Activated CD4-positive, alpha-beta T cell treated with anti-CD3 and anti-CD28 coated beads for 36 hours (primary cell): ENCODE measurements at regions of chr7 and their contacts with region 1.

Region 1: DNA sequence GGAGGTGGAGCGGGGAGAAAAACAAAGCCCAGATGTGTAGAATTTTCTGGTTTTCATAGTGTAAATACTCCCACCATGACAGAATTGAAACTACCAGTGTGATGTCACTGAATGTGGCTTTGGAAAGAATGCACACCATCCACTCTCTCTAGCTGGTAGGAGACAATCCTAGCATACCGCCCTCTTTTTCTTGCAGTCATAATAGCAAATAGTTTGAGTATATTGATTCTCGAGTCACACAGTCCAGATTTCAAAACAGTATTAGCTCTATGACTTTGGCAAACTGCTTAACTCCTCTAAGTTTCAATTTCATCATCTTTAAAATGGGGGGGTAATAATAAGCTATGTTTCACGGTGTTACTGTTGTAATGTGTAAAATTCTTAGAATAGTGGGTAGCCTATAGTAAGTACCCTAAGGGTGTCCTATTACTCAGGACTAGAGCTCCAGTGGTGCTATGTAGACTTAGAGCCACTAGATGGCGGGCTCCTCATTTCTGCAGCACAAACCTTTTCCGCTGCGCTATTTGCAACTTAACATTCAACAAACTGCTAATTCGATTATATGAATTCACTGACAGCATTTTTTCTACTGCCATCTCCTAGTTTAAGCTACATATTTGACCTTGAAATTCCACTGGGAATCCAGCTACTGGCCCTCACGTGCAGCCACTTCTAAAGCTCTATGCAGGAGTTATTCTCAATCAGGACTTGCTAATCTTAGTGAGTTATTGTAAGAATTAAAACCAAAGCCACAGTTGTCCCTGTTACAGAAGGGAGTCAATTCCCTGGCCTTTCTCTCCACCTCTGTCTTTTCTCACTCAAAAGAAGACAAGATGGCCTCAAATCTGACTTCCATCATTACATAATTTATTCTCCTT is 18.7 kb downstream of the TAS2R40 start:
- DNase-seq: peak; percentile 80
- ATAC-seq: peak; percentile 73
- H3K4me3 Mint-ChIP-seq: no peak overlapping the region
- H3K27ac Mint-ChIP-seq: peak overlapping the region; percentile 51
- H3K4me1 Mint-ChIP-seq: peaks cover 28% of the 10 kb centered on the region
- H3K27me3 Mint-ChIP-seq: peaks cover 7% of the 10 kb centered on the region

Region 2: GRCh38 chr7:143229054-143229790 is 11.3 kb before region 1 on chr7:
- CTCF ChIA-PET with region 1: interaction called, 12 read pairs
- POLR2A ChIA-PET with region 1: no interaction called
- intact Hi-C with region 1: no loop called
- DNase-seq: no peak
- ATAC-seq: no peak
- H3K4me3 Mint-ChIP-seq: no peak overlapping the region
- H3K27ac Mint-ChIP-seq: no peak overlapping the region
- H3K4me1 Mint-ChIP-seq: no peaks in the 10 kb centered on the region
- H3K27me3 Mint-ChIP-seq: no peaks in the 10 kb centered on the region

Region 3: DNA sequence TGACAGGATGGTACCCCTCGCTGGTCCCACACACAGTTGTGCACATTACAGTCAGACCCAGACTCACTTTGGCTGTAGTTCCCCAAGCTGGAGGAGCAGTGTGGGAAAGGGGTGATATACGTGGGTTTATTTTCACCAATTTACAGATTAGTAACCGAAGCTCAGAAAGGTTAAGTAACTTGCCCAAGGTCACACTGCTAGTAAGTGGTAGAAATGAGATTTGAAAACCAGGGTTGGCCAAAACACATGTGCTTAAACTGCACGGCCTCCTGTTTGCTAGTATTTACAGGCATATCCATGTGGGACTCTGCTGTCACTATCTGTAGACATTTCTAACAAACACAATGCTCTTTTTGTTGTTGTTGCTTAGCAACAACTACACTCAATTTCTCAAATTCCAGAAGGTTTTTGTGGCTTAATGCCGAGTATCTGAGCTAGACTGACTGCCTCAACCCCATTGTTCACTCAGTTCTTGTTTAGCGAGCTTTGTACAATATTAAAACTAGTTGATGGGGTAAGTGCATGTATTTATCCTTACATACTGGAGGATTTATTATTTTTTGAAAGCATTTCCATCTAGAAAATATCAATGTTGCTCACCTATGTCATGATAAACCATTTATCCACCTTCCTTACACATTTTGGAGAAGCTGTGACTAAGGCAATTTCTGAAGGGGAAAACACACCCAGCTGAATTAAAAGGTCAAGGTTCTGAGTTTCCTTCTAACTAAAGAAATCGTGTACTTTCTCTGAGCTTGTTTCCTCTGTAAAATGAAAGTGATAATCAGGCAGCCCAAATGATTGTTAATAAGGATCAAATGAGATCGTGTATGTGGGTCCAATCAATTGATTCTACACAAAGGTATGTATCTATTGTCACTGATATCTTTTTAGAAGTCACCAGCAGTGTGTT is 38.9 kb after region 1 on chr7:
- CTCF ChIA-PET with region 1: interaction called, 30 read pairs
- POLR2A ChIA-PET with region 1: interaction called, 3 read pairs
- intact Hi-C with region 1: loop called in 1 of 2 experiments (anchors 2 kb)
- DNase-seq: no peak
- ATAC-seq: peak; percentile 79
- H3K4me3 Mint-ChIP-seq: peak overlapping the region; percentile 49
- H3K27ac Mint-ChIP-seq: peak overlapping the region; percentile 90
- H3K4me1 Mint-ChIP-seq: peaks cover 38% of the 10 kb centered on the region
- H3K27me3 Mint-ChIP-seq: no peaks in the 10 kb centered on the region

Region 4: DNA sequence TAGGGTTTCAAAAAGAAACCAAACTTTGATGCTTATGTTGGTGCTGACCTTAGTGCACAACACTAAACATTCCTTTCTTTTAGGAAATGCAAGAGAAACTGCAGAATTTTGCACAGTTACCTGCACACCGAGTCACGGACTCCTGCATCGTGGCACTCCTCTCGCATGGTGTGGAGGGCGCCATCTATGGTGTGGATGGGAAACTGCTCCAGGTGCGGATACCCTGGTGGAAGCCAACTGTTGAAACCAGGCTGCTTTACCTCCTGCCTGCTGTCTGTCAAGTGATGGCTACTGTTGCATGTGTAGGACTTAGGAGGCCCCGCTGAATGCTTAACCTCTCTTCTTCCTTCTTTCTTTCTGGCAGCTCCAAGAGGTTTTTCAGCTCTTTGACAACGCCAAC is 59.3 kb after region 1 on chr7:
- CTCF ChIA-PET with region 1: interaction called, 182 read pairs
- POLR2A ChIA-PET with region 1: interaction called, 11 read pairs
- intact Hi-C with region 1: loop called (anchors 1 kb)
- DNase-seq: peak; percentile 76
- ATAC-seq: peak; percentile 95
- H3K4me3 Mint-ChIP-seq: no peak overlapping the region
- H3K27ac Mint-ChIP-seq: no peak overlapping the region
- H3K4me1 Mint-ChIP-seq: peaks cover 34% of the 10 kb centered on the region
- H3K27me3 Mint-ChIP-seq: no peaks in the 10 kb centered on the region

Region 5: GRCh38 chr7:143362131-143363015 is 121.8 kb after region 1 on chr7 and contains the start of gene FAM131B:
- CTCF ChIA-PET with region 1: interaction called, 3 read pairs
- POLR2A ChIA-PET with region 1: no interaction called
- intact Hi-C with region 1: loop called in 1 of 2 experiments (anchors 5 kb)
- DNase-seq: peak; percentile 60
- ATAC-seq: peak; percentile 74
- H3K4me3 Mint-ChIP-seq: peak within 1 kb of the TSS; percentile 77
- H3K27ac Mint-ChIP-seq: no peak within 1 kb of the TSS
- H3K4me1 Mint-ChIP-seq: peaks cover 3% of the 10 kb centered on the region
- H3K27me3 Mint-ChIP-seq: peaks cover 35% of the 10 kb centered on the region
- total RNA-seq, gene FAM131B: 1.7 to 1.8 TPM

Region 6: GRCh38 chr7:143408686-143409561 is 168.4 kb after region 1 on chr7 and contains the start of gene EPHA1:
- CTCF ChIA-PET with region 1: interaction called, 11 read pairs
- POLR2A ChIA-PET with region 1: no interaction called
- intact Hi-C with region 1: loop called in 1 of 2 experiments (anchors 2 kb)
- DNase-seq: peak; percentile 63
- ATAC-seq: peak; percentile 69
- H3K4me3 Mint-ChIP-seq: peak within 1 kb of the TSS; percentile 72
- H3K27ac Mint-ChIP-seq: peak within 1 kb of the TSS; percentile 68
- H3K4me1 Mint-ChIP-seq: peaks cover 54% of the 10 kb centered on the region
- H3K27me3 Mint-ChIP-seq: no peaks in the 10 kb centered on the region
- total RNA-seq, gene EPHA1: 2.4 to 2.8 TPM

Region 7: DNA sequence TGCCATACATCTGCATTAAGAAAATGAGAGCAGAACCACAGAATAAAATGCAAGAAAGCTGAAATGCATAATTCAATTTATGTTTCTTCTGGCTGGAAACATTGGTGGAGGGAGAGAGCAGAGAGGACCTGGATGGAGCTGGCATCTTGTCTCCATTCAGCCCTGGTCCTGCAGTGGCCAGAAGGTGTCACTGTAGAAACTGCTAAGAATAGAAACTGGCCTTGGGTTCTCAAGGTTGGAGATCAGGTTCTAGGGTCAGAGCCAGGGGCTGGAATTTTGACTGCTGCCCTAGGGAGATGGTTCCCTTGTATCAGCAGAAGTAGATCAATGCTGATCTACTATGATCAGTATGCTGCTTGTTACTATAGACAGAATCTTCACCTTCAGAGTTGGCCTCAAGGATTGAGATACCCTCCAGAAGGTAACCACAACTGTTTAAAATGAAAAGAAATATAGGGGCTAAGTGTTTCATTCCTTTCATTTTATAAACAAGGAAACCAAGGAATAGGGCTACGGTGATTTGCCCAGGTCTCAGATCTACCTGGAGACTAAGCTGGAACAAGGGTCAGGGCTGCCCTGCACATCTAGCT is 250.3 kb after region 1 on chr7:
- CTCF ChIA-PET with region 1: interaction called, 3 read pairs
- POLR2A ChIA-PET with region 1: no interaction called
- intact Hi-C with region 1: loop called in 1 of 2 experiments (anchors 5 kb)
- DNase-seq: peak; percentile 33
- ATAC-seq: no peak
- H3K4me3 Mint-ChIP-seq: no peak overlapping the region
- H3K27ac Mint-ChIP-seq: no peak overlapping the region
- H3K4me1 Mint-ChIP-seq: peaks cover 27% of the 10 kb centered on the region
- H3K27me3 Mint-ChIP-seq: no peaks in the 10 kb centered on the region